ENCODE measurements at regions of chr2 and their contacts with region 1.

Region 1: GRCh38 chr2:231925303-231926179 is 655 bp downstream of the NPPC start:
- DNase-seq: peak; percentile 88
- ATAC-seq: peak; percentile 92 to 95

Region 2: GRCh38 chr2:231861532-231861931 is 64.0 kb before region 1 on chr2:
- intact Hi-C with region 1: no loop called
- DNase-seq: no peak
- ATAC-seq: no peak

Region 3: GRCh38 chr2:232142049-232142448 is 216.5 kb after region 1 on chr2:
- intact Hi-C with region 1: loop called (anchors 1 to 5 kb)
- DNase-seq: peak; percentile 25
- ATAC-seq: peak; percentile 44 to 67

Region 4: GRCh38 chr2:232321156-232321816 is 395.7 kb after region 1 on chr2:
- intact Hi-C with region 1: loop called (anchors 5 kb)
- DNase-seq: peak; percentile 32
- ATAC-seq: no peak

Region 5: GRCh38 chr2:232327105-232328041 is 401.8 kb after region 1 on chr2:
- intact Hi-C with region 1: loop called (anchors 5 kb)
- DNase-seq: peak; percentile 71
- ATAC-seq: peak; percentile 60 to 64

Measured in left cardiac atrium (tissue), 4 donors.